ENCODE measurements at regions of chr9 and their contacts with region 1.

Region 1: GRCh38 chr9:136885950-136886578 is at the start of gene TRAF2:
- DNase-seq: peak; percentile 97 to 99
- ATAC-seq: peak; percentile 81 to 95 (median 88)
- H3K4me3 ChIP-seq: peak within 1 kb of the TSS; percentile 71
- H3K4me3 Mint-ChIP-seq: peak within 1 kb of the TSS; percentile 85
- H3K27ac ChIP-seq: peak within 1 kb of the TSS; percentile 87
- H3K27ac Mint-ChIP-seq: peak within 1 kb of the TSS; percentile 93 to 98
- H3K4me1 ChIP-seq: peaks cover 59% of the 10 kb centered on the region
- H3K4me1 Mint-ChIP-seq: peaks cover 15 to 34% of the 10 kb centered on the region in 2 donors
- H3K27me3 ChIP-seq: no peaks in the 10 kb centered on the region
- H3K27me3 Mint-ChIP-seq: no peaks in the 10 kb centered on the region
- CTCF ChIP-seq: no peak
- total RNA-seq, gene TRAF2: 17.4 to 35.5 (median 25.0) TPM

Region 2: DNA sequence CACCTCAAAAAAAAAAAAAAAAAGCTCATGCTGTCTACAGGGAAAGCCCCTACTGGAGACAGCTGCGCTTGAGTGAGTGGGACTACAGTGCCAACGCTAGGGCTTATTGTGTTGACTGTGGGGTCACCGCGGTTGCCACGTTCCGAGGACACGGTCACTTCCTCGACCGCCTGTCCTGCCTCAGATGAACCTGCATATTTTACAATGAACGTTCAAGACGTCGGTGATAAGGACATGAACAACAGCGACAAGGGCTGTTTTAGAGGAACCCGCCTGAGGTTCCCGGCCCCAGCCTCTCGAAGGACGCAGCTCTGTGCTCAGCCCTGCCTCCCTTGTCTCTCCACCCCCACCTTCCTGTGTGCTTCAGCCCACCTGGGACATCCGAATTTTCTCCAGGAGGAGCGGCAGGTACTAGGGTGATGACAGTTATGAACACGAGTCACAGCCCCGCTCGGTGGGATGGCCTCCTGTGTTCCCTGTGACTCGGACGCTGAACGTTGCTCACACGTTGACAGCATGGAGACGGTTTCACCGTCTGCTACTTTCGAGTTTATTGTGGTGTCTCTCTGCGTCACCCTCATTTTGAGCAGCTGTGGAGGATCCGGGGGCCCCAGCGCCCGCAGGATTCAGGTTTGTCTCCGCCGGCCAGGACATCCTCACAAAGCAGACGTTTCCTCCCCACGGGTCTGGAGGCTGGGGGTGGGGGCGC is 185.0 kb before region 1 on chr9:
- intact Hi-C with region 1: no loop called
- DNase-seq: peak; percentile 60 to 76
- ATAC-seq: peak; percentile 79 to 91 (median 80)
- H3K4me3 ChIP-seq: peak overlapping the region; percentile 4
- H3K4me3 Mint-ChIP-seq: peak overlapping the region; percentile 59
- H3K27ac ChIP-seq: no peak overlapping the region
- H3K27ac Mint-ChIP-seq: peak overlapping the region; percentile 67 to 89
- H3K4me1 ChIP-seq: peaks cover 32% of the 10 kb centered on the region
- H3K4me1 Mint-ChIP-seq: peaks cover 8 to 12% of the 10 kb centered on the region in 2 donors
- H3K27me3 ChIP-seq: peaks cover 7% of the 10 kb centered on the region
- H3K27me3 Mint-ChIP-seq: peaks cover 19% of the 10 kb centered on the region in 2 donors
- CTCF ChIP-seq: no peak

Region 3: GRCh38 chr9:136865735-136866103 is 20.3 kb before region 1 on chr9:
- intact Hi-C with region 1: loop called (anchors 1 kb)
- DNase-seq: peak in 1 of 2 donors; percentile 22
- ATAC-seq: peak in 1 of 3 donors; percentile 6
- H3K4me3 ChIP-seq: peak overlapping the region; percentile 48
- H3K4me3 Mint-ChIP-seq: peak overlapping the region; percentile 92
- H3K27ac ChIP-seq: peak overlapping the region; percentile 62
- H3K27ac Mint-ChIP-seq: peak overlapping the region; percentile 84 to 88
- H3K4me1 ChIP-seq: peaks cover 23% of the 10 kb centered on the region
- H3K4me1 Mint-ChIP-seq: peaks cover 12 to 16% of the 10 kb centered on the region in 2 donors
- H3K27me3 ChIP-seq: no peaks in the 10 kb centered on the region
- H3K27me3 Mint-ChIP-seq: no peaks in the 10 kb centered on the region
- CTCF ChIP-seq: no peak

Region 4: GRCh38 chr9:136944519-136945279 is 58.6 kb after region 1 on chr9 and contains the starts of genes C8G and FBXW5:
- intact Hi-C with region 1: loop called (anchors 5 kb)
- DNase-seq: peak; percentile 95 to 98
- ATAC-seq: peak; percentile 87 to 92 (median 87)
- H3K4me3 ChIP-seq: peak within 1 kb of the TSS; percentile 92
- H3K4me3 Mint-ChIP-seq: peak within 1 kb of the TSS; percentile 88
- H3K27ac ChIP-seq: peak within 1 kb of the TSS; percentile 61
- H3K27ac Mint-ChIP-seq: peak within 1 kb of the TSS; percentile 89 to 93
- H3K4me1 ChIP-seq: peaks cover 56% of the 10 kb centered on the region
- H3K4me1 Mint-ChIP-seq: peaks cover 7 to 25% of the 10 kb centered on the region in 2 donors
- H3K27me3 ChIP-seq: no peaks in the 10 kb centered on the region
- H3K27me3 Mint-ChIP-seq: no peaks in the 10 kb centered on the region
- CTCF ChIP-seq: peak; percentile 92
- total RNA-seq, gene C8G: 3.9 to 8.5 (median 7.3) TPM
- total RNA-seq, gene FBXW5: 117 to 144 (median 136) TPM

Region 5: GRCh38 chr9:136981588-136982231 is 95.6 kb after region 1 on chr9:
- intact Hi-C with region 1: no loop called
- DNase-seq: no peak
- ATAC-seq: no peak
- H3K4me3 ChIP-seq: no peak overlapping the region
- H3K4me3 Mint-ChIP-seq: no peak overlapping the region
- H3K27ac ChIP-seq: no peak overlapping the region
- H3K27ac Mint-ChIP-seq: no peak overlapping the region
- H3K4me1 ChIP-seq: peaks cover 27% of the 10 kb centered on the region
- H3K4me1 Mint-ChIP-seq: peaks cover 0 to 16% of the 10 kb centered on the region in 2 donors
- H3K27me3 ChIP-seq: peaks cover 10% of the 10 kb centered on the region
- H3K27me3 Mint-ChIP-seq: peaks cover 0 to 7% of the 10 kb centered on the region in 2 donors
- CTCF ChIP-seq: no peak

Region 6: DNA sequence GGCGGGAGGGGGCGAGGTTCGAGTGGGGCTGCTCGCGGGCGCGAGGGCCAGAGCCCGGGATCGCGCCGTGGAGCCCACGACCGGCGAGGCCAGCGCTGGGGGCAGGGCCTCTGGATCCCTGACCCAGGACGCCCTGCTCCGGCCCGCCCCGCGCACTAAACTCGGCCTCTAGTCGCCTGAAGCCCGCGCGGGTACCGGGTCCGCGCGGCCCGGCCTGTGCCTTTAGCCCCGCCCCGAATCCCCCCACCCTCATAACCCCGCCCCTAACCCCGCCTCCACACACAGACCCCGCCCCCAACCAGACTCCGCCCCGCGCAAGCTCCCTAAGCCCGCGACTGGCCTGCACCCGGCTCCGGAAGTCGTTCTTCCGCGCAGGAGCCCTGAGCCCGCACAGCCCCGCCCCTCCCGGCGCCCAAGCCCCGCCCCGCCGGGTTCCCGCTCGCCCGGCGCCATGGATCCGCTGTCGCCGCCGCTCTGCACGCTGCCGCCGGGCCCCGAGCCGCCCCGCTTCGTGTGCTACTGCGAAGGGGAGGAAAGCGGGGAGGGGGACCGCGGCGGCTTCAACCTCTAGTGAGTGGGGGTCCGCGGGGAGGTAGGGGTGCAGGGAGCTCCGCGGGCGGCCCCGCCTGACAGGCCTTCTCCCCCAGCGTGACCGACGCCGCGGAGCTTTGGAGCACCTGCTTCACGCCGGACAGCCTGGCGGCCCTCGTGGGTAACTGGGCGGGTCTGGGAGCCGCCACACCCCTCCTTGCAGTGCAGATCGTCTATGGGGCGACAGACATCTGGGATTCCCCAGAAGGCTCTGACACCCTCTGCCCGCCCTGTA is 106.1 kb after region 1 on chr9 and contains the start of gene PAXX:
- intact Hi-C with region 1: loop called (anchors 1 kb)
- DNase-seq: peak; percentile 92 to 95
- ATAC-seq: peak; percentile 75 to 91 (median 77)
- H3K4me3 ChIP-seq: peak within 1 kb of the TSS; percentile 81
- H3K4me3 Mint-ChIP-seq: peak within 1 kb of the TSS; percentile 88
- H3K27ac ChIP-seq: peak within 1 kb of the TSS; percentile 96
- H3K27ac Mint-ChIP-seq: peak within 1 kb of the TSS; percentile 92 to 96
- H3K4me1 ChIP-seq: peaks cover 53% of the 10 kb centered on the region
- H3K4me1 Mint-ChIP-seq: peaks cover 15 to 52% of the 10 kb centered on the region in 2 donors
- H3K27me3 ChIP-seq: peaks cover 2% of the 10 kb centered on the region
- H3K27me3 Mint-ChIP-seq: peaks cover 0 to 4% of the 10 kb centered on the region in 2 donors
- CTCF ChIP-seq: no peak
- total RNA-seq, gene PAXX: 161 to 188 (median 161) TPM